ENCODE measurements at regions of chr9 and their contacts with region 1.

Region 1: GRCh38 chr9:92669890-92670708 is at the start of gene IPPK:
- DNase-seq: peak; percentile 93 to 100
- H3K4me3 ChIP-seq: peak within 1 kb of the TSS; percentile 78 to 98
- H3K27ac ChIP-seq: peak within 1 kb of the TSS; percentile 94 to 96
- H3K4me1 ChIP-seq: peaks cover 0 to 18% of the 10 kb centered on the region in 2 donors
- H3K27me3 ChIP-seq: no peaks in the 10 kb centered on the region
- CTCF ChIP-seq: no peak
- total RNA-seq, gene IPPK: 28.0 TPM

Region 2: DNA sequence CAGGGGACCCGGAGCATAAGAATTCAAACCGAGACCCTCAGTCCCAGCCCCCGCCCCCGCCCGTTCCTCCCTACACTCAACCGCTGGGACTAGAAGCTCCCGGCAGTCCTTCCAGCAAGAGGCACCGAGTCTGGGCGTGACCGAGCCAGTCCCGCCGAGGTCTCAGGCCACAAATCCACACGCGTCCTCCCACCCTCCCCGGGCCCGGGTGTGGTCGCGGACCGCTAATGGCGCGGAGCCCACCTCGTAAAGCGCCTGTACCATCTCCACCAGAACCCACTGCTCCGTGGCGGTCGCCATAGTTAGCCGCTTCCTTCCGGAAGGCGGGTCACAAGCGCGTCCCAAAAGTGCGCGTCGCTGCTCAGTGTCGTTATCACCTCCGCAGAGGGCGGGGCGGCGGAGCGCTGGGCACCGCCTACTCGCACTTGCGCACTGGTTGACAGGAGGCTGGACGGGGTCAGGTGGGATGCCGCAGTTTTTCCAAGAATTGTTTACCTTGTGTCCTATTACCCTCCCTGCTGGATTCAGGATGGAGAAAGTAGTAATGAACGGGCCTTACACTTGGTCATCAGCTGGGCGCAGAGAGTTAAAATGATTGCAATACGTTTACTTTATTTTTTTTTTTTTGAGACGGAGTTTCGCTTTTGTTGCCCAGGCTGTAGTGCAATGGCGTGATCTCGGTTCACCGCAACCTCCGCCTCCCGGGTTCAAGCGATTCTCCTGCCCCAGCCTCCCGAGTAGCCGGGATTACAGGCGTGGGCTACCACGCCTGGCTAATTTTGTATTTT is 554.8 kb before region 1 on chr9 and contains the start of gene SPTLC1:
- intact Hi-C with region 1: loop called (anchors 10 kb)
- DNase-seq: peak; percentile 79 to 96
- H3K4me3 ChIP-seq: peak within 1 kb of the TSS; percentile 83 to 88
- H3K27ac ChIP-seq: peak within 1 kb of the TSS; percentile 82 to 88
- H3K4me1 ChIP-seq: peaks cover 3 to 6% of the 10 kb centered on the region in 2 donors
- H3K27me3 ChIP-seq: no peaks in the 10 kb centered on the region
- CTCF ChIP-seq: no peak
- total RNA-seq, gene SPTLC1: 48.0 TPM

Region 3: GRCh38 chr9:92140074-92140753 is 529.9 kb before region 1 on chr9:
- intact Hi-C with region 1: loop called (anchors 10 kb)
- DNase-seq: peak in 1 of 2 donors; percentile 89
- H3K4me3 ChIP-seq: peak overlapping the region; percentile 53 to 63
- H3K27ac ChIP-seq: no peak overlapping the region
- H3K4me1 ChIP-seq: peaks cover 0 to 6% of the 10 kb centered on the region in 2 donors
- H3K27me3 ChIP-seq: no peaks in the 10 kb centered on the region
- CTCF ChIP-seq: peak; percentile 68 to 93 (median 91)

Region 4: DNA sequence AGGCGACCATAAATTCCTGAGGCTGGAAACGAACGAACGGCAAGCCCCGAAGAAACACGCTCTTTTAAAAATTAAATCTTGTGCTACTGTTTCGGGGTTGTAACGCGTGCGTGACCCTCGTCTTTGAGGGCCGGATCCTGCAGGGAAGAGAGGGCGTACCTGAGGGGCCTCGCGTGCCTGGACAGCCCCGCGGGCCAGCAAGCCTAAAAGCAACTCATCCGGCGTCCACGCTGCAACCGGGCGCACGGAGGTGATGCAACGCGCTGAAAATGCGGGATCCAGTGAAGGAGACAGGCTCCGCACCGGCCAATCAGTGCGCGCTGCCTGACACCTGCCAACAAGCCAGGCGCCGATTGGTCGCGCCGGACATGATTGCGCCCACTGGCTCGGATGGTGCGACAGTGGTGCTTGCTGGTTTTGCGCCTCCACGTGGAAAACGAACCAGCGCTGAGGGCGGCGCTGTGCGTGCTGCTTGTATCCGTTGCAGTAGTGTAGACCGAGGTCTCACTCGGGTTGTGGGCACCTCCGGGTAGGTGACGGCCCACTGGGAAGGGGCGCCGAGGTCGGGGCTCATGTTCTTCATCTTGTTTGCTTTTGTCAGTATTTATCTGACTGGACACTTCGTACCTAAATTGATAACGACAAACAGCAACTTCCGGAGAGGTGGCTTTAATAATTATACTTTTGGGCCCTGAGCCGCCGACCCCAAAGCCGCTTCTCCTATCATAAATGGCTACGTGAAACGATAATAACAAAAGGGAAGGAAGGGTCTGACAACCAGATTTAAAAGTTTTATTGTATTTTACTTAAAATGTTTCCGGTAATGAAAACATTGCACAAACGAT is 376.4 kb before region 1 on chr9 and contains the start of gene IARS1:
- intact Hi-C with region 1: loop called (anchors 1 kb)
- DNase-seq: peak; percentile 96 to 100
- H3K4me3 ChIP-seq: peak within 1 kb of the TSS; percentile 64 to 80
- H3K27ac ChIP-seq: peak within 1 kb of the TSS; percentile 54 to 67
- H3K4me1 ChIP-seq: peaks cover 8 to 12% of the 10 kb centered on the region in 2 donors
- H3K27me3 ChIP-seq: no peaks in the 10 kb centered on the region
- CTCF ChIP-seq: peak in 1 of 3 experiments; percentile 33
- total RNA-seq, gene IARS1: 44.4 TPM

Region 5: GRCh38 chr9:92325269-92325990 is 344.7 kb before region 1 on chr9 and contains the starts of genes CENPP and NOL8:
- intact Hi-C with region 1: loop called (anchors 1 kb)
- DNase-seq: peak; percentile 42 to 92
- H3K4me3 ChIP-seq: peak within 1 kb of the TSS; percentile 75 to 80
- H3K27ac ChIP-seq: peak within 1 kb of the TSS; percentile 93 to 97
- H3K4me1 ChIP-seq: peaks cover 0 to 16% of the 10 kb centered on the region in 2 donors
- H3K27me3 ChIP-seq: no peaks in the 10 kb centered on the region
- CTCF ChIP-seq: no peak
- total RNA-seq, gene CENPP: 0.43 TPM
- total RNA-seq, gene NOL8: 11.5 TPM

Region 6: DNA sequence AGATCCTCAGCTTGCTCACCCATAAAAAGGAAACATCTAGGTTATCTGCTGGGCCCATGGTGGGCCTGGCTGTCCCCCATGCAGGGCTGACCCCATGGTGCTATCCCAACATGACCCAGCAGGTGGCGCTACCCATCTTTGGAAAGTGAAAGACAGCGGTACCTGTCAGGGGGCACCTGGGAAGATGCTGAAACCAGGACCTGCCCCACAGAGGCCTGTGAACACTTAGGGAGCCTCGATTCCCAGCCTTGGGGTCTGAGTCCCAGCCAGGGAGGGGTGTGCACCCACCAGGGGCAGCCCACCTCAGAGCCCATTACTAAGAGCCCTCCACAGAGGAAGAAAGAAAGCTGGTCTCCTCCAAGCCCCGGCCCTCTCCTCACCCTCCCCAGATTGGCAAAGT is 46.5 kb after region 1 on chr9:
- intact Hi-C with region 1: loop called (anchors 2 kb)
- DNase-seq: no peak
- H3K4me3 ChIP-seq: no peak overlapping the region
- H3K27ac ChIP-seq: no peak overlapping the region
- H3K4me1 ChIP-seq: no peaks in the 10 kb centered on the region
- H3K27me3 ChIP-seq: no peaks in the 10 kb centered on the region
- CTCF ChIP-seq: peak; percentile 81 to 91 (median 83)

Region 7: GRCh38 chr9:93119953-93120845 is 450.1 kb after region 1 on chr9:
- intact Hi-C with region 1: loop called (anchors 10 kb)
- DNase-seq: peak; percentile 90 to 98
- H3K4me3 ChIP-seq: peak overlapping the region in 1 of 2 donors; percentile 1
- H3K27ac ChIP-seq: peak overlapping the region; percentile 67 to 72
- H3K4me1 ChIP-seq: peaks cover 0 to 22% of the 10 kb centered on the region in 2 donors
- H3K27me3 ChIP-seq: no peaks in the 10 kb centered on the region
- CTCF ChIP-seq: peak; percentile 51 to 52 (median 51)